Activated naive CD4-positive, alpha-beta T cell treated with anti-CD3 and anti-CD28 coated beads for 36 hours (primary cell): ENCODE measurements at regions of chr4 and their contacts with region 1.

Region 1: DNA sequence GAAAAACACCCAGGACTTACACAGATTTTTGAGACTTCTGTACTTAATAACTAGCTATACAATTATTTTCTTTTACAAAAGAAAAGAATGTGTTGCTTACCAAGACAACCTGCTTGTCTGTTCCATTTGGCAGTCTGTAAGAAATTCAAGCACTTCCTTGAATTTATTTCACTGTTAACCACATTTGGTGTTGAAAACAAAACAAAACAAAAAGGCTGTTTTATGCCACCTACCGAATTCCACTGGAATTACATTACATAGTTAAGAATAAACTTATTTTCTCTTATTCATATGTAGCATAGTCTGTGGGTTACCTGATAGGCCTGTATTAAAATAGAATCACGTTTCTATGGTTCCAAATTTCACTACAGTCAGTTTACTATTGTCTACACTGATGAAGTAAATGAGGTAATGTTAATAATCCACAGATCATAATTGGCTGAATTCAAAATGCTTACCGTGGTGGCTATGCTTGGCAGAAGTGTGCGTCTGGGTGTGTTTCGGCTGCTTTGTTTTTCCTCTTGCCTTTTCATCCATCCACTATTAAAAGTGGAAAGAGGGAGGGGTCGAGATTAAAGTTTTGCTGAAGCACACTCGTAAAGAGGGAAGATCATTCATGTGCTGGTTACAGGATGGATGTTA is at the start of gene TLR1:
- DNase-seq: peak; percentile 30
- H3K4me3 Mint-ChIP-seq: peak within 1 kb of the TSS; percentile 69
- H3K27ac Mint-ChIP-seq: peak within 1 kb of the TSS; percentile 90
- H3K4me1 Mint-ChIP-seq: peaks cover 30% of the 10 kb centered on the region
- H3K27me3 Mint-ChIP-seq: no peaks in the 10 kb centered on the region
- total RNA-seq, gene TLR1: 4.0 to 4.2 TPM

Region 2: DNA sequence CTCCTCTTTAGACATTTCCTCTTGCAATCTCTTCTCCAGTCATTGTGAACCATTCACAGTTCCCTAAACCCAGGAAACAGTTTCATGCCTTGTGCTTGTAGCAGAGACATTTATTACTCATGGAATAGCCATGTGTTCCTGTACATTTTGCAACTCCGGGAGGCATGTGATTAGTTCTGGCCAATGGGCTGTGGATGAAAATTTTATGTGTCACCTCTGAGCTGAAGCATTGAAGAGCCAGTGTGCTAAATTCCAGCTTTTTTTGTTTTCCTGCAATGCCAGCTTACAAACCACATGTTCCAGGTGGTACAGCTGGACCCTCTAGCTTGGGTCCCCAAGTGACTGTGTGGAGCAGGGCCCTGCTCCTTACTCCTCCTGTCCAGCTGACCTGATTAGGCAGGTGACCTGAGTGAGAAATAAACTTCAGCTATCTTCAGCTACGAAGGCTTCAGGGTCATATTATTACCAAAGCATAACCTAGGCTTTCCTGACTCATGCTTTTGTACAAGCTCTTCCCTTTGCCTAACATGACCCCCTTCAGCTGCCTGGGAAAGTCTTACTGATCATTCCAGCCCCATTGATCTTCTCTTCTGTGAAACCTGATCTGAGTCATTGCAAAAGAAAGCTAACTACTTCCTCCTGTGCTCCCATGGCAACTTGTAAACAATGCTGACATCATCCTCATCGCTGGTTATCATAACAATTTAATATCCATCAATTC is 644.1 kb before region 1 on chr4:
- CTCF ChIA-PET with region 1: no interaction called
- intact Hi-C with region 1: loop called (anchors 1 kb)
- DNase-seq: peak; percentile 72
- H3K4me3 Mint-ChIP-seq: no peak overlapping the region
- H3K27ac Mint-ChIP-seq: no peak overlapping the region
- H3K4me1 Mint-ChIP-seq: peaks cover 73% of the 10 kb centered on the region
- H3K27me3 Mint-ChIP-seq: no peaks in the 10 kb centered on the region

Region 3: GRCh38 chr4:38455092-38455862 is 349.5 kb before region 1 on chr4:
- CTCF ChIA-PET with region 1: no interaction called
- intact Hi-C with region 1: loop called (anchors 1 kb)
- DNase-seq: peak; percentile 11
- H3K4me3 Mint-ChIP-seq: no peak overlapping the region
- H3K27ac Mint-ChIP-seq: peak overlapping the region; percentile 82
- H3K4me1 Mint-ChIP-seq: peaks cover 52% of the 10 kb centered on the region
- H3K27me3 Mint-ChIP-seq: no peaks in the 10 kb centered on the region

Region 4: DNA sequence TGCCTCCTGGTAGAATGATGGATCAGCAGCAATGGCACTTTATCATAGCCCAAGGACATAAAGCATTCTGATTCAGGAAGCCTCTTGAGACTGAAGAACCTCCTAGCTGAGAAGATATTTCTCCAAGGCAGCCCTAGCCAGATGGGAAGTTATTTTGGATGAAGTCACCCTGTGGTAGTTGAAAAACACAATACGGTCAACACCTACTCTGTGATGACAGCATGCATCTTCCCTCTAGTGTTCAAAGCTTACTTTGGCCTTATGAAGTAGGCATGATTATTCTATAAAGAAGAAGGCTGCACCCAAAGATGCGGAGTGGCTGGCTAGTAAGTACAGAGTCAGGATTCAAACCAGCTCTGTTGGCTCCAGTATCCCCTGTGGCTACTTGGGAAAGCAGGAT is 69.9 kb before region 1 on chr4:
- CTCF ChIA-PET with region 1: no interaction called
- intact Hi-C with region 1: no loop called
- DNase-seq: no peak
- H3K4me3 Mint-ChIP-seq: no peak overlapping the region
- H3K27ac Mint-ChIP-seq: no peak overlapping the region
- H3K4me1 Mint-ChIP-seq: peaks cover 8% of the 10 kb centered on the region
- H3K27me3 Mint-ChIP-seq: no peaks in the 10 kb centered on the region

Region 5: GRCh38 chr4:38745881-38746280 is 58.9 kb before region 1 on chr4:
- CTCF ChIA-PET with region 1: no interaction called
- intact Hi-C with region 1: no loop called
- DNase-seq: no peak
- H3K4me3 Mint-ChIP-seq: no peak overlapping the region
- H3K27ac Mint-ChIP-seq: no peak overlapping the region
- H3K4me1 Mint-ChIP-seq: peaks cover 8% of the 10 kb centered on the region
- H3K27me3 Mint-ChIP-seq: peaks cover 4% of the 10 kb centered on the region

Region 6: GRCh38 chr4:38768968-38769394 is 35.8 kb before region 1 on chr4:
- CTCF ChIA-PET with region 1: interaction called, 12 read pairs
- intact Hi-C with region 1: no loop called
- DNase-seq: no peak
- H3K4me3 Mint-ChIP-seq: no peak overlapping the region
- H3K27ac Mint-ChIP-seq: no peak overlapping the region
- H3K4me1 Mint-ChIP-seq: no peaks in the 10 kb centered on the region
- H3K27me3 Mint-ChIP-seq: no peaks in the 10 kb centered on the region

Region 7: GRCh38 chr4:38815885-38816782 is 11.4 kb after region 1 on chr4:
- CTCF ChIA-PET with region 1: no interaction called
- intact Hi-C with region 1: loop called (anchors 1 kb)
- DNase-seq: no peak
- H3K4me3 Mint-ChIP-seq: no peak overlapping the region
- H3K27ac Mint-ChIP-seq: peak overlapping the region; percentile 29
- H3K4me1 Mint-ChIP-seq: peaks cover 25% of the 10 kb centered on the region
- H3K27me3 Mint-ChIP-seq: no peaks in the 10 kb centered on the region

Region 8: DNA sequence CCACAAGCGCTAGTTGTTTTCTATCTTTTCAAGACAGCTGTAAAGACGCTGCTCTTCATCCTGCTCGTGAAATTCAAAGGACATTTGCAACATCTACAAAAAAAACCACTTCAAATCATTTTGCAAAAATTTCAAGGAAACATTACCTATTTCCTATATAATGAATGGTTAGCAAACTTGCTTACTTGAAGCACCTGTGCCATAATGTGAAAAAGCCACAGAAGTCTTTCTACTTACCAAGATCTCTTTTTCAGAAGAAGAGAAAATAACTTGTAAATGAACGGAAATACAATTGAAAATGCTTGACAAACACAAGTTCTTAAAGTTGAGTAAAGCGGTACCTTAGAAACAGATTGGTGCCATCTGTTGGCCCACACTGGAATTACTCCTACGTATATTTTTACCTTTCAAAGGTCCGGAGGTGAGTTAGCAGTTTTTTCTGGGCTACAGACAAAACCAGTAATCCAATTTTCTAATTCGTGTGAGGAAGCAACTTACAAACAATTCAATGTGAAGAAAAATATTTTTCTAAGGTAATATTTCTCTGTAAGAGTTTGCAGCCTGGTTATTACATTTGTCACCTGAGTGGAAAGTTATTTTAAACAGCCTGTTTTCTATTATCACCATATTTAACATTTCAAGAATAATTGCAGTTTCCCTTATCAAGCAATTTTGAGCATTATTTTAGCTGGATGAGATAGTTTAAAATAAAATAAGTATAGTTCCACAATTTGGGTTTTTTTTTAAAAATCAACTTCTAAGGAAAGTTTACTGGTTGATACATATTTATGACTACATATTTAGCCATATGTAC is 52.0 kb after region 1 on chr4 and contains the start of gene TLR6:
- CTCF ChIA-PET with region 1: interaction called, 24 read pairs
- intact Hi-C with region 1: loop called (anchors 1 kb)
- DNase-seq: peak; percentile 86
- H3K4me3 Mint-ChIP-seq: peak within 1 kb of the TSS; percentile 66
- H3K27ac Mint-ChIP-seq: peak within 1 kb of the TSS; percentile 84
- H3K4me1 Mint-ChIP-seq: peaks cover 35% of the 10 kb centered on the region
- H3K27me3 Mint-ChIP-seq: no peaks in the 10 kb centered on the region
- total RNA-seq, gene TLR6: 3.6 TPM

Region 9: GRCh38 chr4:39044364-39044955 is 239.7 kb after region 1 on chr4:
- CTCF ChIA-PET with region 1: interaction called, 3 read pairs
- intact Hi-C with region 1: loop called (anchors 1 kb)
- DNase-seq: peak; percentile 99
- H3K4me3 Mint-ChIP-seq: peak overlapping the region; percentile 83
- H3K27ac Mint-ChIP-seq: peak overlapping the region; percentile 92
- H3K4me1 Mint-ChIP-seq: peaks cover 51% of the 10 kb centered on the region
- H3K27me3 Mint-ChIP-seq: no peaks in the 10 kb centered on the region